Ascending aorta (tissue), 2 donors: ENCODE measurements at regions of chr12 and their contacts with region 1.

Region 1: DNA sequence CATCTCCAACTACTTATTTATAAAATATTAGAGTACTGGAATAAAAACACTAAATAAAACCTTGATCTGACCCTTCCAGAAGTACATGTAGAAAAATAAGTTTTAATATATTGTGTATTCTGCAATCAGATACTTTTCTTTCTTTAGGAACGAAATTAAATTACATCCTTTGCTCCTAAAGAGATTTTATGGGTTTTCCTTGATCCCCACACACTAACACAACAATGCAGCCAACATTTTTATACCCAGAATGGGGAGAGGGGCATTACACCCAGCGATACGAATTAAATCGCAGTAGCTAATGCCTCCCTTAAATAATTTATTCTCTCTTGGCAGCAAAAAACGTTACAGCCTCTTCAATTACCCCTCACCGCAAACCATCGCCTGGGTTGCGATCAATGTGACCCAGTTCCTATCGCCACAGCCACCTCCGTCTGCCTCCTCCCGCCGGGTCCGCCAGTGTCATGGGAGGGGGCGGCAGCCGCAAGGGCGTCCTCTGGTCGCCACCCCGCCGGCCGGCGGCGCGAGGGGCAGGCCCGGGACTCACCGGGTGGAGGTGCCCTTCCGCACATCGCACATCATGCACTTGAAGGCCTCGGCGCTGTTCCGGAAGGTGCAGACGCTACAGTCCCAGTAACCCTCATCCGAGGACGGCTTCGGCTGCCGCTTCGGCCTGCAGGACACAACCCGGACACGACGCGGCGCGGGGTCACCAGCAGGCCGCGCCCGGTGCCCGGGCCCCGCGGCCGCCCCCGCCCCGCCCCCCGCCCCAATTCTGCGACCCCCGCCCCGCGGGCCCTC is 796 bp downstream of the YAF2 start:
- DNase-seq: peak; percentile 33 to 87
- H3K4me3 ChIP-seq: peak overlapping the region; percentile 96 to 98
- H3K27ac ChIP-seq: peak overlapping the region; percentile 87 to 97
- H3K4me1 ChIP-seq: peaks cover 0 to 11% of the 10 kb centered on the region in 2 donors
- H3K27me3 ChIP-seq: no peaks in the 10 kb centered on the region
- CTCF ChIP-seq: peak in 2 of 3 experiments; percentile 36 to 57

Region 2: DNA sequence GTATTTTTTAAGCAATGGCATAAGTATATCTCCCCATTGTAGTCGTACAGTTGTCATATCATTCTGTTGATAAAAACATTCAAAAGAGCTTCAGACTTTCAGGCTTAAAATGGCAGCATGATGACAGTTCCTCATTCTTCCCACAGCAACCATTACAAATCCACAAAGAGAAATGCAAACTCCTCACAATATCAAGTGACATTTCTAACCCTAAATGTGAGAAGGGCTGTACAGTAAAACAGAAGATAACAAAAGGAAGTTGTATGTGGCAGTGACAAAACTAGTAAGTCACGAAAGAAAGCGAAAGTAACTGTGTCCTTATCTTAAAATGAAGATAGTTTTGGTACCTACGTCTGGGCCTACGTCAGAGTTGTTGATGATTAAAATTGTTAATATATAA is 139.3 kb before region 1 on chr12:
- intact Hi-C with region 1: no loop called
- DNase-seq: no peak
- H3K4me3 ChIP-seq: peak overlapping the region; percentile 38 to 49
- H3K27ac ChIP-seq: peak overlapping the region in 1 of 2 donors; percentile 49
- H3K4me1 ChIP-seq: no peaks in the 10 kb centered on the region
- H3K27me3 ChIP-seq: no peaks in the 10 kb centered on the region
- CTCF ChIP-seq: no peak

Region 3: GRCh38 chr12:42144408-42145196 is 92.7 kb before region 1 on chr12 and contains the start of gene GXYLT1:
- intact Hi-C with region 1: loop called (anchors 1 kb)
- DNase-seq: peak; percentile 66 to 94
- H3K4me3 ChIP-seq: peak within 1 kb of the TSS; percentile 87 to 91
- H3K27ac ChIP-seq: peak within 1 kb of the TSS; percentile 73 to 92
- H3K4me1 ChIP-seq: peaks cover 3 to 8% of the 10 kb centered on the region in 2 donors
- H3K27me3 ChIP-seq: no peaks in the 10 kb centered on the region
- CTCF ChIP-seq: no peak
- total RNA-seq, gene GXYLT1: 12.3 TPM

Region 4: DNA sequence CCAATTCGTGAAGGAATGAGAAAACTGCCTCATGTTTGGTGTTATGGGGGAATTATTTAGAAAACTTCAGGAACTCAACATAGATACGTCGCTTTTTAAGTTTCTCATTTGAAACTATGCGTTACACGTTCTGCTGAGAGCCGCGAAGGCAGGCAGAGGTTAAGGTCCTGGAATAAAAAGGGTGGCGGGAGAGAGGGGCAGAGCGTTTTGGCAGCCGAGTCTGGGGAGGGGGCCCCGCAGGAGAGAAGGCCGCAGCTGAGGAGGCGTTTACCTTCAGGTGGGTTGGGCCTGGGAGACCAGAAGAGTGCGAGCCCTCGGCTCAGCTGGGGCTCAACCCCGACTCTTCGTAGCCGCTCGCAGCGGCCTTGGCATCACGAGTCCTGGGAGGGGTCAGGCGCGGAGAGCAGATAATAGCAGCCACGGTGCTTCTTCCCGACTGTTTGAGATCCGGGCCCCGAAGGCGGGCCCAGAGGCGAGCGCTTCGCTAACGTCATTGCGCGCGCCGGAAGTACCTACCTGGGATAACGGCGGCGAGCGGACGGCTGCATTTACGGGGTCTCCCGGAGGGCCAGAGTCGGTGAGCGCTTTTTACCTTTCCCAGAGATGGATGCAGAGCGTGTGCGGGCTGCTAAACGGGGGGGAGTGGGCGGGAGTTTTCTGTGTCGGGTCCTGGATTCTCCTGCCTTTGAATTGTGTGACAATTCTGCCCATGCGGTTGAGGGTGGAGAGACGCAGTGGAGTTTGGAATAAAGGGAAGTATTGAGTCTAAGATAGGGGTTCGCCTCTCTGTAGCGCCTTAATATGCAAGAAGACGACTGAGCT is 88.6 kb after region 1 on chr12 and contains the starts of genes PPHLN1 and ZCRB1:
- intact Hi-C with region 1: loop called (anchors 2 kb)
- DNase-seq: peak; percentile 33 to 86
- H3K4me3 ChIP-seq: peak within 1 kb of the TSS; percentile 78 to 82
- H3K27ac ChIP-seq: peak within 1 kb of the TSS; percentile 84 to 89
- H3K4me1 ChIP-seq: peaks cover 0 to 13% of the 10 kb centered on the region in 2 donors
- H3K27me3 ChIP-seq: no peaks in the 10 kb centered on the region
- CTCF ChIP-seq: no peak
- total RNA-seq, gene PPHLN1: 1.7 TPM
- total RNA-seq, gene ZCRB1: 4.4 TPM

Region 5: DNA sequence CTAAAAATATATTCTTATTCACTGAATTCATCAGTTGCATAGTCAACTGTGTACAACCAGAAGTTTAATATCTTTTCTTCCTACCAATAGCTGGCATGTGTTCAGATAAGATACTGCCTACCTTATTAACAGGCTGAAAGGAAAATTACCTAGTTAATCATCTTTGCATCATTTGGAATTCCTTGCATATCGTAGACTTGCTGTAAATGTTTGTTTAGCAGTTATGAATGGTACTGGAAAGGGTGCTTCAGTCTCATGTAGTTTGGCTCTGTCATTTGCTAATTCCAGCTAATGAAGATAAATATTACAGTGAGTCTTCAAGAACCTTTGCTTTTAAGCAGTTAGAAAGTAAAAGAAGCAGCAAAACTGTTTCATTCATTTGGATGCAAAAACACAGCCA is 173.1 kb after region 1 on chr12:
- intact Hi-C with region 1: loop called (anchors 10 kb)
- DNase-seq: no peak
- H3K4me3 ChIP-seq: no peak overlapping the region
- H3K27ac ChIP-seq: no peak overlapping the region
- H3K4me1 ChIP-seq: no peaks in the 10 kb centered on the region
- H3K27me3 ChIP-seq: no peaks in the 10 kb centered on the region
- CTCF ChIP-seq: no peak

Region 6: GRCh38 chr12:42589465-42590329 is 352.4 kb after region 1 on chr12 and contains the start of gene PRICKLE1:
- intact Hi-C with region 1: loop called (anchors 10 kb)
- DNase-seq: peak in 1 of 2 donors; percentile 72
- H3K4me3 ChIP-seq: peak within 1 kb of the TSS; percentile 77 to 89
- H3K27ac ChIP-seq: peak within 1 kb of the TSS; percentile 23 to 55
- H3K4me1 ChIP-seq: peaks cover 5 to 13% of the 10 kb centered on the region in 2 donors
- H3K27me3 ChIP-seq: no peaks in the 10 kb centered on the region
- CTCF ChIP-seq: no peak
- total RNA-seq, gene PRICKLE1: 1.8 TPM

Region 7: GRCh38 chr12:43758728-43759563 is 1521.7 kb after region 1 on chr12 and contains the starts of genes IRAK4 and PUS7L:
- intact Hi-C with region 1: loop called (anchors 2 kb)
- DNase-seq: peak; percentile 85 to 98
- H3K4me3 ChIP-seq: peak within 1 kb of the TSS; percentile 53 to 78
- H3K27ac ChIP-seq: peak within 1 kb of the TSS; percentile 75 to 88
- H3K4me1 ChIP-seq: peaks cover 4 to 21% of the 10 kb centered on the region in 2 donors
- H3K27me3 ChIP-seq: no peaks in the 10 kb centered on the region
- CTCF ChIP-seq: peak; percentile 38 to 50 (median 46)
- total RNA-seq, gene IRAK4: 7.3 TPM
- total RNA-seq, gene PUS7L: 2.4 TPM

Region 8: DNA sequence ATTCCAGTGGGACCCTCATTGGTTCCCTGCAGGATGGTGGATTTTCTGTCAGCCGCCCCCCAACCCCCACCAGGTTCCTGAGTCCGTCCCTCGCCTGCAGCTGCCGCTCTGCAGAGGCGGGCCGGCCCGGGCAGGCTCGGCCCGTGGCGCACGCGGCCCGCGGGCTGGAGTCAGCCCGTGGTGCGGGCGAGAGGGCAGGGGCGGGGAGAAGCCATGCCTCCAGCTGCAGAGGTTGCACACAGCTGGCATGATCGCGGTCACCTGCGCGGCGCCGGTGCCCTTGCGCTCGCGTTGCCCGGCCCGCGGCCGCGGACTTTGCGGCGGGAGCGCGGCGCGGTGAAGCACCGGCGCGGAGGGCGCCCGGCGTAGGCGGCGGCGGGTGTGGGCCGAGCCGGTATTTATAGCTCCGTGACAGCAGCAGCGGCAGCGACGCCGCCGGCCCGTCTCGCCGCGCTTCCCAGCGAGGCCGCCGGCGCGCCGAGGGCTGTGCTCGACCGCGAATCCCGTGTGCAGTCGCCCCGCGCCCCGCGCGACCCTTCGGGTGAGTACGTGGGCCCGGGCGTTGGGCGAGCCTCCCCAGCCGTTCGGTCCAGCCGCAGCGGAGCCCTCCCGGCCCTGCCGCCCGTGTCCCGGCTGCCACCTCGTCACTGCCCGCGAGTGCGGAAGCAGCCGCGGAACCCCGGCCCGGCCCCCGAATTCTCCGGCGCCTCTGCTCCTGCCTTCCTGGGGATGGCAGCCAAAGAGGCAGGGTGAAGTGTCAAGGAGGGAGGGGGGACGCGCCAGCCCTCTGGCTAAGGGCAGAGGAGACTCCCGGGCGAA is 1598.6 kb after region 1 on chr12 and contains the start of gene TMEM117:
- intact Hi-C with region 1: loop called (anchors 10 kb)
- DNase-seq: peak; percentile 13 to 82
- H3K4me3 ChIP-seq: peak within 1 kb of the TSS; percentile 88 to 89
- H3K27ac ChIP-seq: peak within 1 kb of the TSS; percentile 97
- H3K4me1 ChIP-seq: peaks cover 0 to 12% of the 10 kb centered on the region in 2 donors
- H3K27me3 ChIP-seq: no peaks in the 10 kb centered on the region
- CTCF ChIP-seq: no peak
- total RNA-seq, gene TMEM117: 0.43 TPM